B cell (primary cell): ENCODE measurements at regions of chrX and their contacts with region 1.

Region 1: GRCh38 chrX:39859991-39860861 is 237.5 kb downstream of the BCOR start:
- DNase-seq: peak; percentile 18
- ATAC-seq: peak; percentile 54
- H3K4me3 ChIP-seq: no peak overlapping the region
- H3K4me3 Mint-ChIP-seq: peak overlapping the region; percentile 50
- H3K27ac ChIP-seq: no peak overlapping the region
- H3K27ac Mint-ChIP-seq: peak overlapping the region; percentile 82
- H3K4me1 ChIP-seq: peaks cover 14 to 22% of the 10 kb centered on the region in 2 donors
- H3K4me1 Mint-ChIP-seq: peaks cover 30% of the 10 kb centered on the region
- H3K27me3 ChIP-seq: no peaks in the 10 kb centered on the region
- H3K27me3 Mint-ChIP-seq: no peaks in the 10 kb centered on the region
- CTCF ChIP-seq: no peak

Region 2: DNA sequence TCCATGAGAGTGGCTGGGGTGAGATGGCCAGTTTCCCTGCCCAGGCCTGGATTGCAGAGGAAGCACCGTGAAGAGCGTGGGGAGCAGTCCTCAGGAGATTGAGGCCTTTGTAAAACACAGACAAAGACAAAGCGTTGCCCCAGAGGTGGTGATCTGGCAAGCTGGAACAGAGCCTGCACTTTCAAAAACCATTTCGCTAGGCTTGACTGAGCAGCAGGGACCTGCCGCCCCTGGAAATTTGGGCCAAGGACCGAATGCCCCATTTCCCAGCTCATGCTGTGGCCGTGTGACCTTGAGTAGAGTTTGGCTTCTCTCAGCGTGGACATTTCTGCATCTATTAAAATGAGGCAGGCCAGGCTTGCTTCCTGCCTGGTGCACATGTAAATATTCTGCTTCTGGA is 143.8 kb before region 1 on chrX:
- CTCF ChIA-PET with region 1: no interaction called
- POLR2A ChIA-PET with region 1: no interaction called
- intact Hi-C with region 1: no loop called
- DNase-seq: no peak
- ATAC-seq: no peak
- H3K4me3 ChIP-seq: no peak overlapping the region
- H3K4me3 Mint-ChIP-seq: no peak overlapping the region
- H3K27ac ChIP-seq: no peak overlapping the region
- H3K27ac Mint-ChIP-seq: no peak overlapping the region
- H3K4me1 ChIP-seq: no peaks in the 10 kb centered on the region
- H3K4me1 Mint-ChIP-seq: no peaks in the 10 kb centered on the region
- H3K27me3 ChIP-seq: no peaks in the 10 kb centered on the region
- H3K27me3 Mint-ChIP-seq: no peaks in the 10 kb centered on the region
- CTCF ChIP-seq: no peak

Region 3: GRCh38 chrX:39814391-39814790 is 45.8 kb before region 1 on chrX:
- CTCF ChIA-PET with region 1: no interaction called
- POLR2A ChIA-PET with region 1: no interaction called
- intact Hi-C with region 1: no loop called
- DNase-seq: peak; percentile 43
- ATAC-seq: no peak
- H3K4me3 ChIP-seq: no peak overlapping the region
- H3K4me3 Mint-ChIP-seq: no peak overlapping the region
- H3K27ac ChIP-seq: no peak overlapping the region
- H3K27ac Mint-ChIP-seq: no peak overlapping the region
- H3K4me1 ChIP-seq: no peaks in the 10 kb centered on the region
- H3K4me1 Mint-ChIP-seq: peaks cover 10% of the 10 kb centered on the region
- H3K27me3 ChIP-seq: peaks cover 0 to 20% (median 1%) of the 10 kb centered on the region in 4 experiments
- H3K27me3 Mint-ChIP-seq: peaks cover 31% of the 10 kb centered on the region
- CTCF ChIP-seq: peak; percentile 32

Region 4: DNA sequence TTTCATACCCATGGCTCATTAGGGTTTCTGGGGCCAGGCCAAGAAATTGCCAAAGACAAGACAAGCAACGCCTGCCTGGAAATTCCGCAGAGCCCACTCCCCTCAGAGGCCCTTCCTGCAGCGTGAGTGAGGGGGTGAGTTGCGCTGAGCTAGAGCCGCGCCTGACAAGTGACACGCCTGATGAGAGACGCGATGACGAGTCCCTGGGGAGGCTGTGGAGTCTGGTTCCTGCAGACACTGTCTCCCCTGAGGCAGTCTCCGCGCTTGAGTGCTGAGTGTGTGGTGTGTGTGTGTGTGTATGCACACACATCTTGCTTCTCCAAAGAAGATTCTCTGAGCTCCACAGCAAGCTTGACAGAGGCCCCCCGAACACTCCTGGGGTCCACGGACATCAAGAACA is 32.3 kb before region 1 on chrX:
- CTCF ChIA-PET with region 1: no interaction called
- POLR2A ChIA-PET with region 1: interaction called, 8 read pairs
- intact Hi-C with region 1: loop called (anchors 1 kb)
- DNase-seq: peak; percentile 84
- ATAC-seq: peak; percentile 98
- H3K4me3 ChIP-seq: no peak overlapping the region
- H3K4me3 Mint-ChIP-seq: peak overlapping the region; percentile 52
- H3K27ac ChIP-seq: no peak overlapping the region
- H3K27ac Mint-ChIP-seq: peak overlapping the region; percentile 72
- H3K4me1 ChIP-seq: peaks cover 17% of the 10 kb centered on the region in 2 donors
- H3K4me1 Mint-ChIP-seq: peaks cover 28% of the 10 kb centered on the region
- H3K27me3 ChIP-seq: peaks cover 0 to 57% (median 11%) of the 10 kb centered on the region in 4 experiments
- H3K27me3 Mint-ChIP-seq: peaks cover 48% of the 10 kb centered on the region
- CTCF ChIP-seq: no peak